ENCODE measurements at regions of chr17 and their contacts with region 1.

Region 1: DNA sequence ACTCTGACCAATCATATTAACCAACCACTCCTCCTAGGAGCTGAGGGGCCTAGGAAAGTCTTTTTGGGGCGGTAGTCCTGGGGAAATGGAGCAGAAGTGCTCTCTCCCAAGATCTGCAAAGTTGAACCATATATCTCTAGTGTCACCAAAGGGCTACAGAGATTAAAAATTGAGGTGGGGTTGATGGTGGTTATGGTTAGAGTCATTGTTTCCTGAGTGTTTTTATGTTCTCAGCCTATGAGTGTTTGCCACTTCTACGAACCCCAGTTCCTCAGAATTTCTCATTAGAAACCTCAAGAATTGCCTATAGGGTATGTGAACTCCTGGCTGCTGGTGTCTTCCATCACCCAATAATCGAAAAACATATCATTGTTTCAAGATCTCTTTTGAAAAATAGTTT is 217.8 kb downstream of the CDRT15L2 start:
- DNase-seq: peak in 1 of 2 donors; percentile 4
- ATAC-seq: peak; percentile 75 to 90 (median 89)
- H3K4me3 ChIP-seq: no peak overlapping the region
- H3K4me3 Mint-ChIP-seq: peak overlapping the region; percentile 83
- H3K27ac ChIP-seq: peak overlapping the region; percentile 72
- H3K27ac Mint-ChIP-seq: peak overlapping the region; percentile 86 to 92
- H3K4me1 ChIP-seq: peaks cover 14% of the 10 kb centered on the region
- H3K4me1 Mint-ChIP-seq: peaks cover 39 to 47% of the 10 kb centered on the region in 2 donors
- H3K27me3 ChIP-seq: no peaks in the 10 kb centered on the region
- H3K27me3 Mint-ChIP-seq: no peaks in the 10 kb centered on the region
- CTCF ChIP-seq: no peak

Region 2: DNA sequence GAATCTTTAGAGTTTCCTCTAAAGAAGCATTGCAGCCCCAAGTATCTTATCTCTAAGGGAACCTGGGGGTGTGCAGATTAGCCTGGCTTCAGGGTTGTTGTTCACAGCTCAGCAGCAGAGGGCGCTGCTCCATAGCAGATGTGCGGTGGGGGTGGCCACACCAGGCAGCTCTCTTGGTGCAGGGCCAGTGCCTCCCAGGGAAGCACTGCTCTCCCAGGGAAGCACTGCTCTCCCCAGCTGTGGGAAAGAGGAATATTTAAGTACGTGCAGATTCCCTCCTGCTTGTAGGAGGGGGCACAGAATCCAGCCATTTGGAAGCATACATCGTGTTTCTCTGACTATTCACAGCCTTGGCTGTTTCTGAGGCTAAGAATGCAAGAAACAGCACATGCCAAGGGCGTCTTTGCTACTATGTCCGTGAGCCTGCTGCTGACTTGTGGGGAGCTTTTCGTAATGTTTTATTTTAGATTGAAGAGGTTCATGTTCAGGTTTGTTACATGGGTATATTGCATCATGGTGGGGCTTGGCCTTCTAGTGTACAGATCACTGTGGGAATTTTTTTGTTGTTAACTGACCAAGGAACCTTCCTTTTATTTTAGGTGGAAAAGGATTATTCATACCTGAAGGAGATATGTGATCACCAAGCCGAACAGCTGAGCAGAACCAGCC is 570.3 kb before region 1 on chr17:
- intact Hi-C with region 1: no loop called
- DNase-seq: peak; percentile 63 to 88
- ATAC-seq: peak; percentile 87 to 99 (median 96)
- H3K4me3 ChIP-seq: no peak overlapping the region
- H3K4me3 Mint-ChIP-seq: no peak overlapping the region
- H3K27ac ChIP-seq: no peak overlapping the region
- H3K27ac Mint-ChIP-seq: no peak overlapping the region
- H3K4me1 ChIP-seq: no peaks in the 10 kb centered on the region
- H3K4me1 Mint-ChIP-seq: peaks cover 4% of the 10 kb centered on the region in 2 donors
- H3K27me3 ChIP-seq: no peaks in the 10 kb centered on the region
- H3K27me3 Mint-ChIP-seq: no peaks in the 10 kb centered on the region
- CTCF ChIP-seq: peak; percentile 88

Region 3: GRCh38 chr17:20702692-20703091 is 94.6 kb before region 1 on chr17:
- intact Hi-C with region 1: loop called (anchors 5 kb)
- DNase-seq: peak; percentile 42 to 52
- ATAC-seq: peak; percentile 43 to 73 (median 65)
- H3K4me3 ChIP-seq: no peak overlapping the region
- H3K4me3 Mint-ChIP-seq: peak overlapping the region; percentile 83
- H3K27ac ChIP-seq: peak overlapping the region; percentile 45
- H3K27ac Mint-ChIP-seq: peak overlapping the region; percentile 93 to 98
- H3K4me1 ChIP-seq: peaks cover 62% of the 10 kb centered on the region
- H3K4me1 Mint-ChIP-seq: peaks cover 71 to 73% of the 10 kb centered on the region in 2 donors
- H3K27me3 ChIP-seq: no peaks in the 10 kb centered on the region
- H3K27me3 Mint-ChIP-seq: no peaks in the 10 kb centered on the region
- CTCF ChIP-seq: no peak

Region 4: GRCh38 chr17:20852239-20852989 is 55.1 kb after region 1 on chr17:
- intact Hi-C with region 1: loop called (anchors 5 kb)
- DNase-seq: peak in 1 of 2 donors; percentile 30
- ATAC-seq: peak in 2 of 3 donors; percentile 58 to 82
- H3K4me3 ChIP-seq: no peak overlapping the region
- H3K4me3 Mint-ChIP-seq: peak overlapping the region; percentile 83
- H3K27ac ChIP-seq: no peak overlapping the region
- H3K27ac Mint-ChIP-seq: no peak overlapping the region
- H3K4me1 ChIP-seq: peaks cover 12% of the 10 kb centered on the region
- H3K4me1 Mint-ChIP-seq: peaks cover 9 to 18% of the 10 kb centered on the region in 2 donors
- H3K27me3 ChIP-seq: peaks cover 2% of the 10 kb centered on the region
- H3K27me3 Mint-ChIP-seq: peaks cover 11 to 26% of the 10 kb centered on the region in 2 donors
- CTCF ChIP-seq: no peak

Region 5: DNA sequence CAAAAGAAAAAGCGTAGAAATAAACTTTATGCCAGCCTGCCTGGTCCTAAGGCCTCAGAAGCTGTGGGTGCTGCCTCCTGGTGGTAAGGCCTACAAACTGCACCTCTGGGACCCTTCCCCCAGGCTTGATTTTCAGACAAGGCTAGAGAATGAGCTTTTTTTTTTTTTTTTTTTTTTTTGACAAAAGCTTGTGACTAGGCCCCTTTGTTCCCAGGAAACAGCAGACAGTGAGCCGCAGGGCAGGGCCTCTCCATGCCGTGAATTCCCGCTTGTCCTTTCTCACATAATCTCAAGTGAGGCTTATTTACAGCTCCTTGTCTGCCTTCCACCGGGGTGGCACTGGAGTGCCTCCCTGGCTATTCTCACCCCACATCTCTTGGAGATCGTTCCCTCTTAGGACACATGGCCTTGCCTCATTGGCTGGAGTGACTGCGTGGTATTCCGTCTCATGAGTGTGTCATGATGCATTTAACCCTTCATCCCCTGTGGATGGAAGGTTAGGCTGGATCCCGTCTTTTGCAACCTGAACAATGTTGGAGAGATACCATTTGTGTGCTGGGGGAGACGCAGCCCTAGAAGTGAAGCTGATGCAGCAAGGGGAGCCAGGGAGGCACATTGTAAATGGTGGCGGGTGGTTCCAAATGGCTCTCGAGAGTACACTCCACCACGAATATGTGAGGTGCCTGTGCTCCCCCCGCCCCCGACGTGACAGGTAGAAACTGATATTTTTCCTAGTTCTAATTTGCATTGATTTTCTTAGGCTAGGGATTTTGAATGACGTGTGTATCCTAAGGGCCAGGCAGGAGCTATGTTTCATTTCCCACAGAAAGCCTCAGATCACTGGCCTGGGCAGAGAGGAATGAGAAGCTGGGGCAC is 195.9 kb after region 1 on chr17:
- intact Hi-C with region 1: no loop called
- DNase-seq: peak; percentile 49 to 82
- ATAC-seq: peak; percentile 73 to 97 (median 86)
- H3K4me3 ChIP-seq: no peak overlapping the region
- H3K4me3 Mint-ChIP-seq: no peak overlapping the region
- H3K27ac ChIP-seq: no peak overlapping the region
- H3K27ac Mint-ChIP-seq: no peak overlapping the region
- H3K4me1 ChIP-seq: no peaks in the 10 kb centered on the region
- H3K4me1 Mint-ChIP-seq: no peaks in the 10 kb centered on the region
- H3K27me3 ChIP-seq: no peaks in the 10 kb centered on the region
- H3K27me3 Mint-ChIP-seq: no peaks in the 10 kb centered on the region
- CTCF ChIP-seq: peak; percentile 86

Measured in natural killer cell (primary cell).